ENCODE measurements at regions of chr6 and their contacts with region 1.

Region 1: DNA sequence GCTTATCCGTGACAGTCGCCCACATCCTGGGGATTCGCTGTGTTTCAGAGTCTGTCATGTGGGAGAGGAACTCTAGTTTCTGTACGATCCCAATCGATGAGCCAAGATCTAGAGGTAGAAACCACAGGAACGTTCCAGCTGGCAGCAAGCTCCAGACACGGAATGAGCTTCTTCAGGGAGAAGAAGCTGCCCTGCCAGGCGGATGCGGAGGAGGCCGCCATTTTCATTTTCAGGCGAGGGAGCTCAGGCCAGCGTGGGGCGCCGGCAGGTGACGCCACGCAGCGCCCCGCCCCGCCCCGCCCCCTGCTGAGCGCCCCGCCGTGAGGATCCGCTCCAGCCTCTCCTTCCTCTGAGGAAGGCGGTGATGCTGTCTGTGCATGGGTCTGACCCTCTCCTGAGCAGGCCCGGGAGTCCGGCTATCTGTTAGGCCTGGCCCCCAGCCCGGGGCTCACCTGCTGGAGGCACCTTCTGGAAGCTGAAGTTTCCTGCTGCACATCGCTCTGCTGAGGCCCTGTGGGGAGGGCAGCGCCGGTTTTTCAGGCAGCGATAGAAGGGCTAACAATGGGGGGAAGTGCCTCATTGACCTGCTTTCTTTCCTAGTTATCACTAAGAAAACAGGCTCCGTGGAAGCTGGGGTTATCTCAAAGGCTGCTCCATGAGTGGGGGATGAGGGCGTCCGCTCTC is 147.5 kb downstream of the ERMARD start:
- DNase-seq: no peak

Region 2: GRCh38 chr6:169746556-169746955 is 152.4 kb before region 1 on chr6:
- in situ Hi-C with region 1: loop called (anchors 10 kb)
- DNase-seq: no peak

Region 3: GRCh38 chr6:169864148-169865020 is 34.6 kb before region 1 on chr6:
- in situ Hi-C with region 1: no loop called
- DNase-seq: no peak

Region 4: GRCh38 chr6:170186006-170186958 is 287.3 kb after region 1 on chr6:
- in situ Hi-C with region 1: no loop called
- DNase-seq: no peak